ENCODE measurements at regions of chr5 and their contacts with region 1.

Region 1: GRCh38 chr5:146426853-146427618 is 20.1 kb upstream of the TCERG1 start:
- DNase-seq: no peak
- ATAC-seq: peak; percentile 53
- H3K4me3 Mint-ChIP-seq: no peak overlapping the region
- H3K27ac Mint-ChIP-seq: no peak overlapping the region
- H3K4me1 Mint-ChIP-seq: peaks cover 4% of the 10 kb centered on the region
- H3K27me3 Mint-ChIP-seq: peaks cover 23% of the 10 kb centered on the region

Region 2: DNA sequence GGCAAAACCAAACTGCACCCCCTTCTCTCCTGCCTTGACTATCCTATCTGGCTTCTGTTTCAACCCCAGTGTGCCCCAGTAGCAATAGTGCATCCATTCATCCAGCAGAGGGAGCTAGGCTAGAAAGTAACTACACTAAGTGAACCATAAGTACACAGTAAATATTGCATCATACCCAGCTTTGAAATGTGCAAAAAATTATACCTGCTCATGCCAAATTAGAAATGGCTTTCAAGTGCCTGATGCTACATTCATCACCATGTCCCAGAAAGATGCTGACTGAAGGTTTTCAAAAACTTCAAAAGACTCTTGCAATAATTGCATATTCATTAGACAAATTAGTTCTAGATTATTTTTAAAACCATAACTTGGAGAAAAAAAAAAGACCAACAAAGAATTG is 745.4 kb before region 1 on chr5:
- CTCF ChIA-PET with region 1: no interaction called
- POLR2A ChIA-PET with region 1: no interaction called
- intact Hi-C with region 1: loop called in 1 of 2 experiments (anchors 2 kb)
- DNase-seq: peak; percentile 60
- ATAC-seq: peak; percentile 94
- H3K4me3 Mint-ChIP-seq: no peak overlapping the region
- H3K27ac Mint-ChIP-seq: no peak overlapping the region
- H3K4me1 Mint-ChIP-seq: peaks cover 3% of the 10 kb centered on the region
- H3K27me3 Mint-ChIP-seq: no peaks in the 10 kb centered on the region

Region 3: GRCh38 chr5:145697251-145697990 is 729.6 kb before region 1 on chr5:
- CTCF ChIA-PET with region 1: no interaction called
- POLR2A ChIA-PET with region 1: no interaction called
- intact Hi-C with region 1: loop called in 1 of 2 experiments (anchors 5 kb)
- DNase-seq: peak; percentile 46
- ATAC-seq: no peak
- H3K4me3 Mint-ChIP-seq: no peak overlapping the region
- H3K27ac Mint-ChIP-seq: no peak overlapping the region
- H3K4me1 Mint-ChIP-seq: no peaks in the 10 kb centered on the region
- H3K27me3 Mint-ChIP-seq: no peaks in the 10 kb centered on the region

Region 4: DNA sequence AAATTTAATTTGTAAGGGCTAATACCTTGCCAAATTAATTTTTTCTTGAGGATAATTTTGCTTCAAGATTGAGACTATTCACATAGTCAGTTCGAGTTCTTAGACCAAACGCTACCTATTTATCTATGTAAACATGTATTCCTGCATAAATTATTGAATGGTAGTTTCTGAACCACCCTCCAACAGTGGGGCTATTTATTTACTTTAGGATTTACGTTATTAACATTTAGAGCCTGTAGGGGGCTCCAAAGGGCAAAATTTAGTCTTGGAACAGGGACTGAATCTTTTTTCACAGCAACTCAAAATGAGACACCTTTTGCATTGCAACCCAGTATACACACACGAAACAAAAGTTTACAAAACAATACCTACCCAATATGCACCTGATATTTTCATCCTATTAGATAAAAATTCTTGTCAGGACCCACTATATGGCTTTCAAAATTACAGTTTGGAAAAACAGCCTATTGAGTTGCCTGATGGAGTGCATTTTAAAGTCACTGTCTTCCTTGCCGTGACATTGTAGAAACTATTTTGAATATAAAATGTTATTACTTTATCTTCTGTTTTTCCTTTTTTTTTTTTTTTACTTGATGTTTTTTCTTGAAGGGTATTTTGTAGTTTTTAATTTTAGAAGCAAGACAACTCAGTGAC is 135.5 kb before region 1 on chr5:
- CTCF ChIA-PET with region 1: interaction called, 5 read pairs
- POLR2A ChIA-PET with region 1: no interaction called
- intact Hi-C with region 1: loop called (anchors 1 kb)
- DNase-seq: peak; percentile 20
- ATAC-seq: peak; percentile 71
- H3K4me3 Mint-ChIP-seq: no peak overlapping the region
- H3K27ac Mint-ChIP-seq: no peak overlapping the region
- H3K4me1 Mint-ChIP-seq: no peaks in the 10 kb centered on the region
- H3K27me3 Mint-ChIP-seq: no peaks in the 10 kb centered on the region

Region 5: GRCh38 chr5:146409054-146409671 is 17.9 kb before region 1 on chr5:
- CTCF ChIA-PET with region 1: interaction called, 10 read pairs
- POLR2A ChIA-PET with region 1: no interaction called
- intact Hi-C with region 1: no loop called
- DNase-seq: no peak
- ATAC-seq: no peak
- H3K4me3 Mint-ChIP-seq: no peak overlapping the region
- H3K27ac Mint-ChIP-seq: no peak overlapping the region
- H3K4me1 Mint-ChIP-seq: no peaks in the 10 kb centered on the region
- H3K27me3 Mint-ChIP-seq: peaks cover 4% of the 10 kb centered on the region